Testis (tissue), 5 donors: ENCODE measurements at regions of chr18 and their contacts with region 1.

Region 1: DNA sequence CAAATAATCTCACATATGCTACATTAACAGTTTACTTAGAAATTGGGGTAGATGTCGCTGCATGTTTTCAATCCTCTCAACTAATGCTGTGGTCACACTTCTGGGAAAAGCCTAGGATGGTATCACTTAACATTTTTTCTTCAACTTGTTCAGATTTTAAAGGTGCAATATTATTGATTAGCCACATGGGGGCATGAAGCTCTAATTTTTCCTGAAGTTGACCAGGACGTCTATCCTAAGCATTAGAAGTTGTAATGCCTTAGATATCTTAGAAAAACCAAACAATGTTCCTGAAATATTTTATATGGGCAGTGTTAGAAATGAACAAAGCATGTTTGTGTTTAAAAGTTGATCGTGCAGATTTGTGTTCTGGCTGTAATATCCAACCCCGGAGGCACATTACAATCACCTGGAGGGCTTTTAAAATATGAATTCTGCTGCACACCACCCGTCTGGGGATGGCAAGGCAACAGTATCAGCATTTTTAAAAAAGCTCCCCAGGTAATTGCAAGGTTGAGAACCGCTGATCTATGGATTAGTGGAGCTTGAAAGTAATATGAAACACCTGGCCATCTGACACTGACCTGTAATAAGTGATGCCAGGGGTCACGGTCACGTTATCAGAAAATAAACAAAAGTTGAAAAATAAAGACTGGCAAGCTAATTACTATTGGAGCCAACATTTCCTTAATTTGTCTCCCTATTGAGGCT is 100.5 kb upstream of the LMAN1 start:
- DNase-seq: no peak
- H3K4me3 ChIP-seq: no peak overlapping the region
- H3K27ac ChIP-seq: no peak overlapping the region
- H3K4me1 ChIP-seq: peaks cover 6% of the 10 kb centered on the region
- H3K27me3 ChIP-seq: no peaks in the 10 kb centered on the region
- CTCF ChIP-seq: peak; percentile 31 to 80 (median 68)
- POLR2A ChIP-seq: no peak

Region 2: GRCh38 chr18:59823596-59824195 is 364.2 kb after region 1 on chr18:
- intact Hi-C with region 1: loop called (anchors 10 kb)
- DNase-seq: peak; percentile 90
- H3K4me3 ChIP-seq: no peak overlapping the region
- H3K27ac ChIP-seq: no peak overlapping the region
- H3K4me1 ChIP-seq: no peaks in the 10 kb centered on the region
- H3K27me3 ChIP-seq: no peaks in the 10 kb centered on the region
- CTCF ChIP-seq: peak; percentile 73 to 82 (median 81)
- POLR2A ChIP-seq: no peak